ENCODE measurements at regions of chr20 and their contacts with region 1.

Region 1: DNA sequence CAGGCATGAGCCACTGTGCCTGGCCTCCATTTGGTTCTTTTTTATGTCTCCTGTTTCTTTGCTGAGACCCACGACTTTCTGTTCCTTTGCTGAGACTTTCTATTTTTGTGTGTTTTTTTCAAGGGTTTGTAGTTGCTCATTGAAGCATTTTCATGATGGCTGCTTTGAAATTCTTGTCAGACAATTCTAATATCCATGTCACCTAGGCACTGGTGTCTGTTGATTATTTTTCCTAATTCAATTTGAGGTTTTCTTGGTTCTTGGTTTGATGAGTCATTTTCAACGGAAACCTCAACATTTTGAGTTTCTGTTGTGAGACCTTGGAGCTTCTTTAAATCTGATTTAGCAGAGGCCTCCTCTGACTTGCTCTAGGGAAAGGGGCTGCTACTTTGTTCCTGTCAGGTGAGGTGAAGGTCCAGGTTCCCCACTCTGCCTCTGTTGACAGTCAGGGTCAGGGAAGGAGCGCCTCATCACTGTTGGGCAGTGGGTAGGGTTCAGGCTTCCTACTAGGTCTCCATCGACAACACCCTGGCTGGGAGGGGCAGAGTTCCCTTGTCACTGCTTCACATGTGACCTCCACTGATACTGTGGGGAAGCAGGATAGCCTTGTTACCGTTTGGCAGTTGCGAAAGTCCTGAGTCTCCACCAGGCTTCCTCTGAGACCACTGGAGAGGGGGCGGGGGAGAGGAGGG is 67.2 kb upstream of the RNF24 start:
- DNase-seq: peak; percentile 82
- ATAC-seq: peak; percentile 78
- H3K4me3 Mint-ChIP-seq: peak overlapping the region; percentile 38
- H3K27ac Mint-ChIP-seq: peak overlapping the region; percentile 93
- H3K4me1 Mint-ChIP-seq: peaks cover 47% of the 10 kb centered on the region
- H3K27me3 Mint-ChIP-seq: peaks cover 7% of the 10 kb centered on the region

Region 2: GRCh38 chr20:3980260-3981131 is 102.1 kb before region 1 on chr20:
- CTCF ChIA-PET with region 1: interaction called, 10 read pairs
- DNase-seq: peak; percentile 57
- ATAC-seq: peak; percentile 89
- H3K4me3 Mint-ChIP-seq: peak overlapping the region; percentile 71
- H3K27ac Mint-ChIP-seq: peak overlapping the region; percentile 91
- H3K4me1 Mint-ChIP-seq: peaks cover 21% of the 10 kb centered on the region
- H3K27me3 Mint-ChIP-seq: no peaks in the 10 kb centered on the region

Region 3: GRCh38 chr20:3993109-3993508 is 89.4 kb before region 1 on chr20:
- CTCF ChIA-PET with region 1: interaction called, 20 read pairs
- DNase-seq: no peak
- ATAC-seq: peak; percentile 40
- H3K4me3 Mint-ChIP-seq: no peak overlapping the region
- H3K27ac Mint-ChIP-seq: peak overlapping the region; percentile 63
- H3K4me1 Mint-ChIP-seq: peaks cover 60% of the 10 kb centered on the region
- H3K27me3 Mint-ChIP-seq: no peaks in the 10 kb centered on the region

Region 4: DNA sequence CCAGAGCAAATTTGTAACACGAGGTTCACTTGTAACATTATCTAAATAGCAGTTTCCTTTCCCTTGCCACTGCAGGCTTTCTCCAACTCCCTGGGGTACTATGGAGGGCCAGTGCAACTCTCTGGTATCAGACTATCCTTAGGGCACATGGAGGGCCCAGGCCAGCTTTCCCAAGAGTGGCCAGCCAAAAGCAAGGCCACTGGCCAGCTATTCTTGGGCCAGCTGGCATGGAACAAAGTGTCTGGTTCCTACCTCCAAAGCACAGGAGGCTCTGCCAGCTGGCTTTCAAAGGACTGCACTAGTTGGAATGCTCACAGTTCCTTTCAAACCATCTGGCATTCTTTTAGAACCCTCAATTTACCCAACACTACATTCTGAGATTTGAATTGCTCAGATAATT is 75.9 kb before region 1 on chr20:
- CTCF ChIA-PET with region 1: interaction called, 15 read pairs
- DNase-seq: no peak
- ATAC-seq: no peak
- H3K4me3 Mint-ChIP-seq: no peak overlapping the region
- H3K27ac Mint-ChIP-seq: no peak overlapping the region
- H3K4me1 Mint-ChIP-seq: peaks cover 26% of the 10 kb centered on the region
- H3K27me3 Mint-ChIP-seq: no peaks in the 10 kb centered on the region

Region 5: GRCh38 chr20:4014031-4014474 is 68.5 kb before region 1 on chr20:
- CTCF ChIA-PET with region 1: interaction called, 44 read pairs
- DNase-seq: no peak
- ATAC-seq: no peak
- H3K4me3 Mint-ChIP-seq: peak overlapping the region; percentile 86
- H3K27ac Mint-ChIP-seq: peak overlapping the region; percentile 16
- H3K4me1 Mint-ChIP-seq: peaks cover 48% of the 10 kb centered on the region
- H3K27me3 Mint-ChIP-seq: peaks cover 2% of the 10 kb centered on the region

Region 6: GRCh38 chr20:4022386-4023286 is 59.9 kb before region 1 on chr20:
- CTCF ChIA-PET with region 1: interaction called, 11 read pairs
- DNase-seq: no peak
- ATAC-seq: no peak
- H3K4me3 Mint-ChIP-seq: no peak overlapping the region
- H3K27ac Mint-ChIP-seq: no peak overlapping the region
- H3K4me1 Mint-ChIP-seq: peaks cover 6% of the 10 kb centered on the region
- H3K27me3 Mint-ChIP-seq: peaks cover 33% of the 10 kb centered on the region

Region 7: DNA sequence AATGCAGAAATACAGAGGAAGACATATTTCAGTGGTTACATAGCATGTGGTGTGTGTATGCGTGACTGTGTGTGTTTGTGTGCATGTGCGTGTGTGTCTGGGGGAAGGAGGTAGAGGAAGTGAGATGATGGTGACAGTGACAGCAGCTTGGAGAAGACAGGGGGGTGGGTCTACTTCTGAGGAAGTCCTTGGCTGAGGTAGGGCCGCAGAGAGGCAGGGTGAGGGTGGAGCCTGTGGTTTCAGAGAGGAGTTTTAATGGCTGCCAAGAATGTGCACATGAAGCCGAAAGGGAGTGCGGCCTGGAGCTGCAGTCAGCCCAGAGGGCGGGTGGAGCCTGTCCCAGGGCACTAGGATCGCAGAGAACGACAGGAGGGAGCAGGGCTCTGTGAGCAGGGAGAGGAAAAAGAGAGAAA is 44.5 kb before region 1 on chr20:
- CTCF ChIA-PET with region 1: interaction called, 10 read pairs
- DNase-seq: peak; percentile 95
- ATAC-seq: peak; percentile 100
- H3K4me3 Mint-ChIP-seq: peak overlapping the region; percentile 72
- H3K27ac Mint-ChIP-seq: peak overlapping the region; percentile 98
- H3K4me1 Mint-ChIP-seq: peaks cover 21% of the 10 kb centered on the region
- H3K27me3 Mint-ChIP-seq: no peaks in the 10 kb centered on the region

Region 8: GRCh38 chr20:4297127-4297826 is 214.7 kb after region 1 on chr20:
- CTCF ChIA-PET with region 1: no interaction called
- DNase-seq: no peak
- ATAC-seq: no peak
- H3K4me3 Mint-ChIP-seq: no peak overlapping the region
- H3K27ac Mint-ChIP-seq: no peak overlapping the region
- H3K4me1 Mint-ChIP-seq: no peaks in the 10 kb centered on the region
- H3K27me3 Mint-ChIP-seq: peaks cover 5% of the 10 kb centered on the region

Region 9: GRCh38 chr20:4726710-4727397 is 644.3 kb after region 1 on chr20:
- CTCF ChIA-PET with region 1: no interaction called
- DNase-seq: peak; percentile 71
- ATAC-seq: peak; percentile 71
- H3K4me3 Mint-ChIP-seq: peak overlapping the region; percentile 43
- H3K27ac Mint-ChIP-seq: no peak overlapping the region
- H3K4me1 Mint-ChIP-seq: peaks cover 9% of the 10 kb centered on the region
- H3K27me3 Mint-ChIP-seq: peaks cover 4% of the 10 kb centered on the region